Esophagus squamous epithelium (tissue), 5 donors: ENCODE measurements at regions of chr9 and their contacts with region 1.

Region 1: DNA sequence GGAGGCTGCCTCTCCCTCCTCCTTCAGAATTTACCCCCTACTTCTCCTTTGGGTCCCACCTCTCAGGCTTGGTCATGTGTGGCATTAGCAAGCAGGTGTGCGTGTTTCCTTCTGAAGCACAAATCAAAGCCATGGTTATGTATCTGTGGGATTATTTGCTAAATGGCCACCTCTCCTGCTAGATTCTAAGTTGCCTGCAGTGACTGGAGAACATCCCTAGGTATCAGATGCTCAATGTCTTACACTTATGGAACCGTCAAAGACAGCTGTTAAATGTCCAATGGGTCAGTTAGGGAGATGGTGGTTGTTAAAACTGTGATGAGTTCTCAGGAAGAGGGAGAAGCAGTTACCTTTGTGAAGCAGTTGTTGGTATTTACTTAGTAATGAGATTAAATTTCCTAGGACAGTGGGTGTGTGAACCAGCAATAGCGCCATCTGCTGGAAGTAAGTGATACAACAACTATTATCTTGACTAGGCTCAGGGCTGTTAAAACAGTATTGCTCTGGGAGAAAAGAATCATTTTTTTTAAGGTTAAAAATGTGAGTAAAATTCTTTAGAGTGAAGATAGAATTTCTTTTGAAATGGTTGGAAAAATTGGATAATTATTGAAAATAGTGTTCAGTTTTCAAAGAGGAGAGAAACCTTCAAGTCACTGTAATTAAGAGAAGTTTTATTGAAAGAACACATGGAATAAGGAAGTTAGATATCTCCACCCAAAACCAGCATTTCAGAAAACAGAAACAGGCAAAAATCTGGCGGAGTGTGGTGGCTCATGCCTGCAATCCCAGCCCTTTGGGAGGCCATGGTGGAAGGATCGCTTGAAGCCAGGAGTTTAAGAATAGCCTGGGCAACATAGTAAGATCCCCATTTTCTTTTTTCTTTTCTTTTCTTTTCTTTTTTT is 71.3 kb downstream of the TMC1 start:
- DNase-seq: no peak
- H3K4me3 ChIP-seq: no peak overlapping the region
- H3K27ac ChIP-seq: peak overlapping the region in 1 of 4 donors; percentile 24
- H3K4me1 ChIP-seq: peaks cover 0 to 38% (median 13%) of the 10 kb centered on the region in 3 donors
- H3K27me3 ChIP-seq: no peaks in the 10 kb centered on the region
- CTCF ChIP-seq: peak; percentile 71 to 95 (median 88)
- POLR2A ChIP-seq: no peak

Region 2: GRCh38 chr9:72292256-72292682 is 300.5 kb before region 1 on chr9:
- intact Hi-C with region 1: loop called (anchors 5 kb)
- DNase-seq: no peak
- H3K4me3 ChIP-seq: no peak overlapping the region
- H3K27ac ChIP-seq: peak overlapping the region in 2 of 4 donors; percentile 11 to 12
- H3K4me1 ChIP-seq: peaks cover 0 to 10% (median 7%) of the 10 kb centered on the region in 3 donors
- H3K27me3 ChIP-seq: no peaks in the 10 kb centered on the region
- CTCF ChIP-seq: peak in 5 of 6 experiments; percentile 36 to 69 (median 62)
- POLR2A ChIP-seq: no peak

Region 3: GRCh38 chr9:72364679-72365524 is 227.9 kb before region 1 on chr9 and contains the start of gene ZFAND5:
- intact Hi-C with region 1: loop called (anchors 5 kb)
- DNase-seq: peak; percentile 81
- H3K4me3 ChIP-seq: peak within 1 kb of the TSS; percentile 63 to 97 (median 91)
- H3K27ac ChIP-seq: peak within 1 kb of the TSS; percentile 100
- H3K4me1 ChIP-seq: peaks cover 4 to 52% (median 18%) of the 10 kb centered on the region in 3 donors
- H3K27me3 ChIP-seq: peaks cover 0 to 3% (median 0%) of the 10 kb centered on the region in 4 donors
- CTCF ChIP-seq: peak in 2 of 6 experiments; percentile 26 to 29
- POLR2A ChIP-seq: peak; percentile 95 to 100 (median 100)
- total RNA-seq, gene ZFAND5: 89.1 to 203 (median 92.0) TPM